Naive thymus-derived CD4-positive, alpha-beta T cell (primary cell): ENCODE measurements at regions of chr6 and their contacts with region 1.

Region 1: GRCh38 chr6:4018172-4018905 is 60.6 kb downstream of the FAM217A start:
- DNase-seq: peak; percentile 91 to 98 (median 95)
- ATAC-seq: peak; percentile 83
- H3K4me3 ChIP-seq: peak overlapping the region; percentile 76
- H3K4me3 Mint-ChIP-seq: peak overlapping the region; percentile 86 to 99 (median 94)
- H3K27ac ChIP-seq: peak overlapping the region; percentile 95
- H3K27ac Mint-ChIP-seq: peak overlapping the region; percentile 95 to 100 (median 96)
- H3K4me1 ChIP-seq: peaks cover 27 to 39% of the 10 kb centered on the region in 2 donors
- H3K4me1 Mint-ChIP-seq: peaks cover 45 to 88% (median 70%) of the 10 kb centered on the region in 7 donors
- H3K27me3 ChIP-seq: no peaks in the 10 kb centered on the region
- H3K27me3 Mint-ChIP-seq: no peaks in the 10 kb centered on the region

Region 2: DNA sequence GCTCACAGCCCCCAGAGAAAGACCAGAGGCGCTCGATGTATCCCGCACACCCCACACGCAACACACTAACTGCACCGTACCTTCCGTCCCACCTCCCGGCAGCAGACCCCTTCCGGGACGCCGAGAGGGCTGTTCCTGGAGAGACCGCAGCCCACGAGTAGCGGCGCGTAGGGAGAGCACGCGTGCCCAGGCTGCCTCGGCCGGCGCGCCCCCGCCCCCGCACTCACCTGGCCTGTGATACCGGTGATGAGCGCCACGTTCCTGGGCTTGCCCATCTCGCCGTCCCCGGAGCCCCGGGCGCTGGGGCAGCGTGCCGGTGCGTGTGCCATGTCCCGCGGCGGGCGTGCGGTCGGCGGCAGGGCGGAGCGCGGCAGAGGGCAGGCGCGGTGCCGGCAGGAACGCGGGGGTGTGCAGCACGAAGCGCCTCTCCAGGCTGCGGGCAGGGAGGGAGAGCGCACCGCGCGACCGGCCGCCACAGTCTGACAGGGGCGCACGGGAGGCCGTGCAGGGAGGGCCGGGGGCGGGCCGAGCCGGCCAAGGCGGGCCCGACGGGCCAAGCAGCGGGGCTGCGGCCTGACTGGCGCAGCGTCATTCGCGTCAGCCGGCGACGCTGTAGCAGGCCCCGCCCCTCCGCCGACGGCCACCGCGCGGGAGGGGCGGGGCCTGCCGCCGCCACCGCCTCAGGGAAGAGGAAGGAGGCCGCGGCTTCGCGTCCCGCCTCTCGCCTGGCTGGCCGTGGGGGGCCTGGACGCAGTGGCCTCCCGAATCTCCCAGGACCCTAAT is 1773.1 kb before region 1 on chr6 and contains the start of gene GMDS:
- CTCF ChIA-PET with region 1: no interaction called
- POLR2A ChIA-PET with region 1: no interaction called
- intact Hi-C with region 1: loop called in 1 of 2 experiments (anchors 5 kb)
- DNase-seq: peak; percentile 67 to 86 (median 79)
- ATAC-seq: peak; percentile 98
- H3K4me3 ChIP-seq: peak within 1 kb of the TSS; percentile 90
- H3K4me3 Mint-ChIP-seq: peak within 1 kb of the TSS; percentile 86 to 97 (median 93)
- H3K27ac ChIP-seq: peak within 1 kb of the TSS; percentile 96
- H3K27ac Mint-ChIP-seq: peak within 1 kb of the TSS; percentile 84 to 98 (median 95)
- H3K4me1 ChIP-seq: peaks cover 15 to 18% of the 10 kb centered on the region in 2 donors
- H3K4me1 Mint-ChIP-seq: peaks cover 41 to 77% (median 61%) of the 10 kb centered on the region in 7 donors
- H3K27me3 ChIP-seq: no peaks in the 10 kb centered on the region
- H3K27me3 Mint-ChIP-seq: no peaks in the 10 kb centered on the region
- total RNA-seq, gene GMDS: 12.7 to 33.9 (median 18.3) TPM

Region 3: GRCh38 chr6:3157131-3157927 is 861.0 kb before region 1 on chr6 and contains the start of gene TUBB2A:
- CTCF ChIA-PET with region 1: no interaction called
- POLR2A ChIA-PET with region 1: no interaction called
- intact Hi-C with region 1: loop called in 1 of 2 experiments (anchors 1 kb)
- DNase-seq: peak; percentile 83 to 96 (median 90)
- ATAC-seq: peak; percentile 87
- H3K4me3 ChIP-seq: peak within 1 kb of the TSS; percentile 61
- H3K4me3 Mint-ChIP-seq: peak within 1 kb of the TSS; percentile 81 to 94 (median 92)
- H3K27ac ChIP-seq: peak within 1 kb of the TSS; percentile 86
- H3K27ac Mint-ChIP-seq: peak within 1 kb of the TSS; percentile 75 to 96 (median 93)
- H3K4me1 ChIP-seq: peaks cover 15 to 17% of the 10 kb centered on the region in 2 donors
- H3K4me1 Mint-ChIP-seq: peaks cover 4 to 37% (median 33%) of the 10 kb centered on the region in 7 donors
- H3K27me3 ChIP-seq: no peaks in the 10 kb centered on the region
- H3K27me3 Mint-ChIP-seq: peaks cover 0 to 52% (median 4%) of the 10 kb centered on the region in 5 donors
- total RNA-seq, gene TUBB2A: 2.2 to 39.6 (median 3.1) TPM

Region 4: GRCh38 chr6:3742426-3743344 is 275.7 kb before region 1 on chr6:
- CTCF ChIA-PET with region 1: interaction called, 16 read pairs
- POLR2A ChIA-PET with region 1: interaction called, 4 read pairs
- intact Hi-C with region 1: no loop called
- DNase-seq: peak; percentile 73 to 92 (median 85)
- ATAC-seq: peak; percentile 94
- H3K4me3 ChIP-seq: no peak overlapping the region
- H3K4me3 Mint-ChIP-seq: peak overlapping the region; percentile 26 to 73 (median 58)
- H3K27ac ChIP-seq: no peak overlapping the region
- H3K27ac Mint-ChIP-seq: peak overlapping the region in 7 of 9 donors; percentile 2 to 81 (median 38)
- H3K4me1 ChIP-seq: peaks cover 0 to 5% of the 10 kb centered on the region in 2 donors
- H3K4me1 Mint-ChIP-seq: peaks cover 0 to 14% (median 12%) of the 10 kb centered on the region in 7 donors
- H3K27me3 ChIP-seq: no peaks in the 10 kb centered on the region
- H3K27me3 Mint-ChIP-seq: peaks cover 11 to 29% (median 17%) of the 10 kb centered on the region in 5 donors

Region 5: GRCh38 chr6:4135665-4136353 is 117.5 kb after region 1 on chr6:
- CTCF ChIA-PET with region 1: interaction called, 12 read pairs
- POLR2A ChIA-PET with region 1: interaction called, 26 read pairs
- intact Hi-C with region 1: loop called (anchors 1 kb)
- DNase-seq: peak; percentile 74 to 93 (median 86)
- ATAC-seq: peak; percentile 97
- H3K4me3 ChIP-seq: peak overlapping the region; percentile 67
- H3K4me3 Mint-ChIP-seq: peak overlapping the region; percentile 83 to 94 (median 87)
- H3K27ac ChIP-seq: peak overlapping the region; percentile 76
- H3K27ac Mint-ChIP-seq: peak overlapping the region; percentile 55 to 88 (median 84)
- H3K4me1 ChIP-seq: peaks cover 10 to 14% of the 10 kb centered on the region in 2 donors
- H3K4me1 Mint-ChIP-seq: peaks cover 20 to 52% (median 37%) of the 10 kb centered on the region in 7 donors
- H3K27me3 ChIP-seq: no peaks in the 10 kb centered on the region
- H3K27me3 Mint-ChIP-seq: no peaks in the 10 kb centered on the region

Region 6: GRCh38 chr6:5174244-5174643 is 1155.9 kb after region 1 on chr6:
- CTCF ChIA-PET with region 1: no interaction called
- POLR2A ChIA-PET with region 1: no interaction called
- intact Hi-C with region 1: loop called in 1 of 2 experiments (anchors 5 kb)
- DNase-seq: peak in 8 of 9 donors; percentile 34 to 79 (median 71)
- ATAC-seq: peak; percentile 93
- H3K4me3 ChIP-seq: peak overlapping the region; percentile 46
- H3K4me3 Mint-ChIP-seq: peak overlapping the region; percentile 18 to 86 (median 78)
- H3K27ac ChIP-seq: peak overlapping the region; percentile 67
- H3K27ac Mint-ChIP-seq: peak overlapping the region; percentile 79 to 96 (median 92)
- H3K4me1 ChIP-seq: peaks cover 23 to 38% of the 10 kb centered on the region in 2 donors
- H3K4me1 Mint-ChIP-seq: peaks cover 31 to 75% (median 64%) of the 10 kb centered on the region in 7 donors
- H3K27me3 ChIP-seq: no peaks in the 10 kb centered on the region
- H3K27me3 Mint-ChIP-seq: no peaks in the 10 kb centered on the region